ENCODE measurements at regions of chr10 and their contacts with region 1.

Region 1: GRCh38 chr10:129626796-129627435 is 159.9 kb downstream of the MGMT start:
- DNase-seq: no peak
- ATAC-seq: peak in 3 of 4 donors; percentile 42 to 50 (median 42)
- H3K4me3 ChIP-seq: peak overlapping the region in 4 of 12 donors; percentile 4 to 11 (median 8)
- H3K27ac ChIP-seq: peak overlapping the region in 7 of 12 donors; percentile 11 to 59 (median 28)
- H3K4me1 ChIP-seq: peaks cover 0 to 28% (median 16%) of the 10 kb centered on the region in 12 donors
- H3K27me3 ChIP-seq: no peaks in the 10 kb centered on the region
- CTCF ChIP-seq: no peak
- POLR2A ChIP-seq: no peak

Region 2: GRCh38 chr10:129466703-129467358 is 160.1 kb before region 1 on chr10 and contains the start of gene MGMT:
- intact Hi-C with region 1: loop called in 1 of 10 experiments (anchors 10 kb)
- DNase-seq: peak; percentile 94 to 98 (median 96)
- ATAC-seq: peak; percentile 93 to 99 (median 98)
- H3K4me3 ChIP-seq: peak within 1 kb of the TSS; percentile 66 to 91 (median 82)
- H3K27ac ChIP-seq: peak within 1 kb of the TSS; percentile 26 to 93 (median 86)
- H3K4me1 ChIP-seq: peaks cover 0 to 18% (median 11%) of the 10 kb centered on the region in 12 donors
- H3K27me3 ChIP-seq: no peaks in the 10 kb centered on the region
- CTCF ChIP-seq: no peak
- POLR2A ChIP-seq: peak in 1 of 2 donors; percentile 81
- total RNA-seq, gene MGMT: 6.2 to 25.3 (median 14.8) TPM